Transverse colon (tissue), 4 donors: ENCODE measurements at regions of chr5 and their contacts with region 1.

Region 1: GRCh38 chr5:171127314-171127713 is 181.7 kb upstream of the TLX3 start:
- DNase-seq: no peak
- H3K4me3 ChIP-seq: no peak overlapping the region
- H3K27ac ChIP-seq: no peak overlapping the region
- H3K4me1 ChIP-seq: no peaks in the 10 kb centered on the region
- H3K27me3 ChIP-seq: no peaks in the 10 kb centered on the region
- CTCF ChIP-seq: no peak
- EP300 ChIP-seq: no peak
- POLR2A ChIP-seq: no peak

Region 2: GRCh38 chr5:170525470-170526211 is 601.7 kb before region 1 on chr5:
- in situ Hi-C with region 1: no loop called
- intact Hi-C with region 1: no loop called
- DNase-seq: no peak
- H3K4me3 ChIP-seq: no peak overlapping the region
- H3K27ac ChIP-seq: no peak overlapping the region
- H3K4me1 ChIP-seq: no peaks in the 10 kb centered on the region
- H3K27me3 ChIP-seq: no peaks in the 10 kb centered on the region
- CTCF ChIP-seq: no peak
- EP300 ChIP-seq: no peak
- POLR2A ChIP-seq: no peak

Region 3: DNA sequence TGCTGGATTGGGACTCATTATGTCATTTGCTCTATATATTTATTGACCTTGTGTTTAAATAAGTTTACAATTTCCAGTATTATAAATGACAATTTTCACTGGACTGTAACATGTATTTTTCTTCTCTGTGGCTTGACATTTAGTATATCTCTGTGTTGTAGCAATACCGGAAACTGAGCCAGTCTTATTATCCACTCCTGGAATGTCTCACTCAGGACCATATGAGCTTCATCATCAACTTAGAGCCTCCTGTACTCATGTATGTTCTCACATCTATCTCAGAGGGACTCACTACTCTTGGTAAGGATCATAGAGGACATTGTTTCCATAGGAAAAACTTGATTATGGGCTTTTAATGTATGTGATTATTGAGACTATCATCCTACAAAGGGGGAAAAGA is 115.2 kb after region 1 on chr5:
- in situ Hi-C with region 1: no loop called
- intact Hi-C with region 1: no loop called
- DNase-seq: no peak
- H3K4me3 ChIP-seq: no peak overlapping the region
- H3K27ac ChIP-seq: no peak overlapping the region
- H3K4me1 ChIP-seq: no peaks in the 10 kb centered on the region
- H3K27me3 ChIP-seq: no peaks in the 10 kb centered on the region
- CTCF ChIP-seq: no peak
- EP300 ChIP-seq: no peak
- POLR2A ChIP-seq: no peak

Region 4: DNA sequence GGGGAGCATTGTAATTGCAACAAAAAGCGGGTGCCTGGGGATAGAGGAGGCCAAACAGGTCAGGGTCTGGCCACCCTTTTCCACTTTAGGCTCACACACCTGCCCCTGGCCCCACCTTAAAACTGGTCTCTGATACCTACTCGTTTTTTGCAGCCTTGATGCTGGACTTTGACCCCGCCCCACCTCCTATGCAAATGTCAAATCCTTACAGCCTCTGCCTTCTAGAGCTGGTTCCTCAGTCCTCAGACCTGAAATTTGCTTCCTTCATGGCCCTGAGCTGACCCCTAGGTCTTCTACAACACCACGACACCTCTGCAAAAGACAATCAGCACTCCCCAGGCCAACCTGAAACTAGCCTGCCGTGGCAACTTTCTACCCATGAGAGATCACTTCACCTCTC is 696.0 kb after region 1 on chr5:
- in situ Hi-C with region 1: no loop called
- intact Hi-C with region 1: loop called (anchors 5 kb)
- DNase-seq: peak; percentile 83
- H3K4me3 ChIP-seq: no peak overlapping the region
- H3K27ac ChIP-seq: peak overlapping the region in 3 of 4 donors; percentile 20 to 41 (median 33)
- H3K4me1 ChIP-seq: peaks cover 0 to 6% (median 2%) of the 10 kb centered on the region in 4 donors
- H3K27me3 ChIP-seq: no peaks in the 10 kb centered on the region
- CTCF ChIP-seq: no peak
- EP300 ChIP-seq: no peak
- POLR2A ChIP-seq: no peak